BJ (cell line): ENCODE measurements at regions of chr3 and their contacts with region 1.

Region 1: DNA sequence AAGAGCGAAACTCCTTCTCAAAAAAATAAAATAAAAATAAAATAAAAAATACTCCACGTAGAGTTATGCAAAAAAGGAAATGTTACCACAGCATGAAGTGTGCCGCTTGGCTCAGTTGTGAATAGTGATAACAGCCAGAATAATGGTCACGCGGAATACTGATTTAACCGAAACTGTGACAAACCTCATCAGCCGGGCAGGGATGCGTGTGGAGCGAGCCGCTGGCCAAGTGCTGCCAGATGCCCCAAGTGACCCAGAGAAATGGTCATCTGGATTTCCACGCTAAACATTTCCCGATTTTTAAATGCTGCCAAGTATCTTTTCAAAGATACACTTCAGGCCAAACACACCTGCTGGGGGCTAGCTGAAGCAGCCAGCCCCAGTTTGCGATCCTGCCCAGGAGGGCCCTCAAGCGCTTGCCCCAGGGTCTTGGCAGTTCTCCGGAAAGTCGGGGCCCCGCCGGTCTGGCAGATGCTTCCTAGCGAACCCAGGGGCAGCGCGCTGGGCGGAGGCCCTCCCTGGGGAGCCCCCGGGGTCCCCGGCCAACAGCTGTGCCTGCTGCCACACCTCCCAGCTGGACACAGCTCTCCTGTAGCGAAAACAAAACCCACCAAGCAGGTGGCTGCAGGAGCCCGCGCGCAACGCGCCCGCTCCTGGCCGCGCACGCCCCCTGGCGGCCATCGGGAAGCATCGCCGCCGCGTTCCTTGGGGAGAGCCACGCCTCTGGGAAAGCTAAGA is 35.1 kb downstream of the CMTM6 start:
- DNase-seq: no peak
- H3K4me3 ChIP-seq: peak overlapping the region; percentile 30
- H3K27me3 ChIP-seq: no peaks in the 10 kb centered on the region
- CTCF ChIP-seq: peak; percentile 87

Region 2: GRCh38 chr3:31544634-31545033 is 922.9 kb before region 1 on chr3:
- CTCF ChIA-PET with region 1: no interaction called
- POLR2A ChIA-PET with region 1: no interaction called
- DNase-seq: no peak
- H3K4me3 ChIP-seq: no peak overlapping the region
- H3K27me3 ChIP-seq: no peaks in the 10 kb centered on the region
- CTCF ChIP-seq: no peak

Region 3: DNA sequence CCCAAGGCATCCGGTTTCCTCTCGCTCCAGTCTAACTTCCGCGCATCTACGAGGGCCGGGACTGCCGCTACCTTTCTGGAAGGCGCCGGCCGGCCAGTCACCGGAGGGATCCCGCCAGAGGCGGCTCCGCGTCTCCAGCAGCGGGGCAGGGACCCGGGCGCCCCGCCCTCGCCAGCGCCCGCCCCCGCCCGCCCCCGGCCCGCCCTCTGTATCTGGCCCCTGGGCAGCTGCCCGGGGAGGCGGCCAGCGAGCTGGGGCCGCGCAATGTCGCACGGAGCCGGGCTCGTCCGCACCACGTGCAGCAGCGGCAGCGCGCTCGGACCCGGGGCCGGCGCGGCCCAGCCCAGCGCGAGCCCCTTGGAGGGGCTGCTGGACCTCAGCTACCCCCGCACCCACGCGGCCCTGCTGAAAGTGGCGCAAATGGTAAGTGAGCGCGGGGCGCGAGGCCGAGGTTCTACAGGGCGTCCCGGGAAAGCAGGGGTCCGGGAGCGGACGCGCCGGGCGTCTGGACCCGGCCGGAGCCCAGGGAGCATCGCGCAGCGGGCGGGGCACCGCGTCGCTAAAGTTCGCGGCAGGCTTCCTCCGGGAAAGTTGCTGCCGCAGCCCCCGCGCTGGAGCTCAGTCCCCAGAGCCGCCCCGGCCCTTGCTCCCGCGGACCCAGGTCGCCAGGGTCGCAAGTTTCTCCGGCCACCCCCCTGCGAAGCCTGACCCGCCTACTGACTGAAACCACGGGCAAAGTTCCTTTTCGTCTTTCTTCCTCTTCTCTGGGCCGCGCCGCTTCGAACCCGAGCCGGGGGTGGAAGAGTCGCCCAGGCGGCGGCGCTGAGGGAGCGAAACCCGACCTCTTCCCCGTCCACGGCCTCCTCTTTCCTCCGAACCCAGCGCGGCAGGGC is 75.6 kb before region 1 on chr3 and contains the start of gene CMTM7:
- CTCF ChIA-PET with region 1: interaction called, 16 read pairs
- POLR2A ChIA-PET with region 1: no interaction called
- DNase-seq: no peak
- H3K4me3 ChIP-seq: peak within 1 kb of the TSS; percentile 85
- H3K27me3 ChIP-seq: no peaks in the 10 kb centered on the region
- CTCF ChIP-seq: no peak
- polyA plus RNA-seq, gene CMTM7: 12.7 and 13.7 TPM in 2 replicates

Region 4: DNA sequence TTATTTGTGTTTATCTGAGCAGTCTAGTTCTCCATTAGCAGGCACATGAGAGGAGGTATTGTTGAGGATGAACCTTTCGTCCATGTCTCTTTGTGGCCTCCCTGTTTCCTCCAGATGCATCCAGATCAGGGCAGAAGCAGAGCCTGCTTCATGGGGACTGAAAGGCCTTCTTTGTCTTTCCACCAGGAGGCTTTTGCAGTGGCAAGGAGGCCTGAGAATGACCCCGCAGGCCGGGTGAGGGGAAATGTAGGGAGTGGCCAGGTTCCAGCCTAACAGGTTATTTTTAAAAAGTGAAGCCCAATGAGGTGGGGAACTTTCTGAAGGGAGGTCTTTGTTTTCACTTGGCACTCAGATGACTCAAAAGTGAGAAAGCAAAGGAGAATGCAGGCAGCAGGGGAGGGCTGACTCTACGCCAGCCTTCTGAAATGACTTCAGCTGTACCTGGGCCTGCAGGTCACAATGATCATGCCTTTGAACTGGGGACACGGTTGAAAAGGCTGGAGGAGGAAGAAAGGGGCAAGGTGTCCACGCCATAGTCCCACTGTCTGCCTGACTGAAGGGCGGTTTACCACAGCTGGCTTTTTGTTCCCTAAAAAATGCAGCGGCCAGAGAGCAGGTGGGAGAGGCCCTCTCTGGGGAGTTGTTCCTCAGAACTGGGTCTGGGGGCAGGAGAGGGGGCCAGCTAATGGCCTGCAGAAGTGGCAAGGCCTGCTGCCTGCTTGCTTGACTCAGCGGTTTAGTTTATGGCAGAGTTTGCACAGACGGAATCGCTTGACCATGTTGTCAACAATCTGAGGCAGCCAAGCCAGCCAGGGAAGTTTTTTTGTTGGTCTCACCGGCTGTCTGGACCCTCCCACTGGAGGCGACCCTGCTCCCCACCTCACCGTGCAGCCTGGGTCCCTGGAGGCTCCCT is 47.1 kb before region 1 on chr3:
- CTCF ChIA-PET with region 1: interaction called, 46 read pairs
- POLR2A ChIA-PET with region 1: no interaction called
- DNase-seq: no peak
- H3K4me3 ChIP-seq: no peak overlapping the region
- H3K27me3 ChIP-seq: no peaks in the 10 kb centered on the region
- CTCF ChIP-seq: peak; percentile 26; the same call in 1 of the 2 replicates

Region 5: GRCh38 chr3:32450992-32451659 is 16.4 kb before region 1 on chr3:
- CTCF ChIA-PET with region 1: interaction called, 34 read pairs
- POLR2A ChIA-PET with region 1: no interaction called
- DNase-seq: no peak
- H3K4me3 ChIP-seq: no peak overlapping the region
- H3K27me3 ChIP-seq: no peaks in the 10 kb centered on the region
- CTCF ChIP-seq: no peak